ENCODE measurements at regions of chr2 and their contacts with region 1.

Region 1: DNA sequence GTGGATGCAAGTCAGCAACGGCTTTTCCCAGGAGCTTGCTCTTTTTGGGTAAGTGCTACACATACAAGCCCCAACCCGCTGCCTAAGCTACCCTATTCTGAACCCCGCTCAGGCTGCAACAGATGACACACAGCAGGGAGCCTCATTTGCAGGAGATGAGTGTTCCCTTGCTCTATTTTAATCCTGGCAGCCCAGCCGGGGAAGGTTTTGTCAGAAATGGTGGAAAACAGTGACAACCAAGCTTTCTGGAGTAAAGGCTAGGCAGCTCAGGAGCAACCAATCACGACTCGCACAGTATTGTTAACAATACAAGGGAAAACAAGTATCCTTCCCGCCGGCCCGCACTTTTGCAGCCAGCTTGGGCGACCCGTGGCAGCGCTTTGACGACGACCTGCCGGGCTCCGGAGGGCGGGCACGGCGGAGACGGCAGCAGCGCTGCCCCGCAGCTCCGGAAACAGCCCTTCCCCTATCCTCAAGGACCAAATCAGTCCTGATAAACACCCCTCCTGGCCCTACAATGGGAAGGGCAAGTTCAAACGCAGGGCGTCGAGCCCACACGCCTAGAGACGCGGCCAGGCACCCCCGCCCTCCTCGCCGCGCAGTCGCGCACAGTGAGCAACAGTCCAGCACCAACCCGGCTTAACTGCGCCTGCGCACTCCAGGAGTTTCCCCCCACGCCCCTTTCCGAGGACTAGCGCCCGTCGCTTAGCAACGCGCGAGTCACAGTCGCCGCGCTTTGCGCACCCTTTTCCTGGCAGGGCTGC is 74.3 kb upstream of the TSPYL6 start:
- DNase-seq: peak; percentile 94
- CTCF ChIP-seq: no peak

Region 2: DNA sequence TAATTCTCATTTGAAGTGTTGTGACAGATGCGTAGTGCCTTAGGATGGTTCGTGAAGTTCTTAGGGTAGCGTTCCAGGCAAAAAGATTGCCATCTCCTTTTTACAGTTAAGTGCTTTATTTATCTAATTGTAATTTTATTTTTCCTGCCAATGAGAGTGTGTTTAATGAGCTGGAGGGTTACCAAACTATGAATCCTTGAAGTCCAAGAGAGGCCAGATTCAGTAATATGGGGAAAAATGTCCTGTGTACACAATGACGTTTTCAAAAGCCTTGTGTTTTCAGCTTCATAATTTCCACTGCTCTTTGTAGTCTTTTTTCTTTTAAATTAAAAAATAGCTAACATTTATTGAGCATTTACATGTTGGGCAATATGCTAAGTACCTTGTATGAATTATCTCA is 191.1 kb before region 1 on chr2:
- CTCF ChIA-PET with region 1: no interaction called
- POLR2A ChIA-PET with region 1: no interaction called
- DNase-seq: no peak
- CTCF ChIP-seq: no peak

Region 3: DNA sequence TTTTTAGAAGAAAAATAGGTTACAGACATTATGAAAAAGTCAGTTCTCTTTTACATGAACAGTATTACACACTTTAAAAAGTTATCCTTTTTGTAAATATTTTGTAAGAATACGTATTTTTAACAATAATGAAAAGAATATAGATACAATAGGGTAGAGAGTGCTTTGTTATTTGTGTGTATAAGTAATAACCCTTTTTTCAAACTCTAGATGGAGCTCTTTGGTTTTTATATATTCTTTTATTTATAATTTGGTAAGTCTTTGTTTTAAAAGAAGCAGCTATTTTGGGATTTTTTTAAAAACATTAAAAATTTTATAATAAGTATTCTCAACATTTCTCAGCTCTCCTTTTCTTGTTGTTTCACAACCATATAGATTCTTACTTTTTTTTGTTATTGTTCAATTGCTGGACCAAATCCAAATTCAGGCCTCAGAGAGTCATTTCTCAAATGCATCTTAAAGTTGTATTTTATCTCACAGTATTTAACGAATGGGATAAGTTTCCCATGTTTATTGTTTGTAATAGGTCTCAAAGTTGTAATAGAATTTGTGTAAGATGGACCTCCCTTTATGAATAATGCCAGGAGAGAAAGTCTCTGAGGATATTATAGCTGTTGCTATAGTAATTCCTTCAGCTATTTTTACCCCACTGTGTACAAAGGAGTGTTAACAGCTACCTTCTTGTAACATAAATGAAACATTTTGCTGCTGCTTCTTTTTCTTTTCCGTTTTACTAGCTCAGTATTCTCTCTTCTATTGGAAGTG is 168.5 kb before region 1 on chr2:
- CTCF ChIA-PET with region 1: no interaction called
- POLR2A ChIA-PET with region 1: no interaction called
- DNase-seq: no peak
- CTCF ChIP-seq: no peak

Region 4: GRCh38 chr2:54341656-54342055 is 11.3 kb after region 1 on chr2:
- CTCF ChIA-PET with region 1: interaction called, 12 read pairs
- POLR2A ChIA-PET with region 1: no interaction called
- DNase-seq: no peak
- CTCF ChIP-seq: no peak

Region 5: DNA sequence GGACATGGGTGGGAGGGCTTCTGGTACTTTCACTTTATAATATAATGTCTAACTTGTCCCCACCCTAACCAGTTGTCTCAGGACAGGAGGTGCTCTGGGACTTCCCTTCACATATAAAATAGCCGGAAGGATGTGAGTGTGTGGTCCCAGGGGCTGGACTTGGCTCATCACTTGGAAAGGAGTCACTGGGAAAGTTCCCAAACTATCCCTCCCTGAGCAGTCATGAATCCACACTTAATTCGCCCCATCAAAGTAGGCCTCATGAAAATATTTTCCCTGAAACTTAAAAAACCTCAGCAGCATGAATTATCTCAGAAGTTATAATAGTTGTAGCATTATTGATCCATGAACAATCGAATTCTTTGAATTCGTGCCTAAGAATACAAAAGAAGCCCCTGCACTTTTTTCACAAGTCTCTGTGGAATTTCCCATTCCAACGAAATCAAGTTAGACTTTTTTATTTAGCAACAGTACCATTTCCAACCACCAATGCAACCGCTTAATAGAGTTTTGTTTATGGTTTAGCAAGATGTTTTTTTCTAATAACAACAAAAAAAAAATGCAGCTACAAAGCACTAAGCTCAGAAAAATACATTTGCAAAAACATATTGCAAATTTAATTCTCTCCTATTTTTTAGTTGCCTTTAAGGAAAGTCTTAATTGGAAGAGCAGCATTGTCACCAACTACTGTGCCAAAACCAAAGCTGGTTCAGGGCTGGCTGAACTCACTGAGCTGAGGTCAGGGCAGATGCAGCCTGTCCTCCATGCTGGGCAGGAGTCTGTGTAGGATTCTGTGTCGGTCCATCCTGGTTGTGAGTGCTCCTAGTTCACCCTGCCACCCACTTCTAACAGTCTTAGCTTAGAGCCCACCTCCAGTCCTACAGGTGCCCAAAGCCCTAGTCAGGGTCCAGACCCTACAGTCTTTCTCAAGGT is 57.0 kb after region 1 on chr2:
- CTCF ChIA-PET with region 1: no interaction called
- POLR2A ChIA-PET with region 1: no interaction called
- DNase-seq: no peak
- CTCF ChIP-seq: no peak

Measured in GM10248 (cell line).